Aorta (tissue), 5 donors: ENCODE measurements at regions of chr17 and their contacts with region 1.

Region 1: GRCh38 chr17:5584383-5585286 is at the start of gene NLRP1:
- DNase-seq: peak; percentile 95 to 98
- ATAC-seq: peak; percentile 95
- H3K4me3 ChIP-seq: peak within 1 kb of the TSS; percentile 13 to 37
- H3K27ac ChIP-seq: peak within 1 kb of the TSS in 1 of 2 donors; percentile 71
- H3K4me1 ChIP-seq: no peaks in the 10 kb centered on the region
- H3K27me3 ChIP-seq: no peaks in the 10 kb centered on the region
- total RNA-seq, gene NLRP1: 35.2 to 82.2 TPM

Region 2: DNA sequence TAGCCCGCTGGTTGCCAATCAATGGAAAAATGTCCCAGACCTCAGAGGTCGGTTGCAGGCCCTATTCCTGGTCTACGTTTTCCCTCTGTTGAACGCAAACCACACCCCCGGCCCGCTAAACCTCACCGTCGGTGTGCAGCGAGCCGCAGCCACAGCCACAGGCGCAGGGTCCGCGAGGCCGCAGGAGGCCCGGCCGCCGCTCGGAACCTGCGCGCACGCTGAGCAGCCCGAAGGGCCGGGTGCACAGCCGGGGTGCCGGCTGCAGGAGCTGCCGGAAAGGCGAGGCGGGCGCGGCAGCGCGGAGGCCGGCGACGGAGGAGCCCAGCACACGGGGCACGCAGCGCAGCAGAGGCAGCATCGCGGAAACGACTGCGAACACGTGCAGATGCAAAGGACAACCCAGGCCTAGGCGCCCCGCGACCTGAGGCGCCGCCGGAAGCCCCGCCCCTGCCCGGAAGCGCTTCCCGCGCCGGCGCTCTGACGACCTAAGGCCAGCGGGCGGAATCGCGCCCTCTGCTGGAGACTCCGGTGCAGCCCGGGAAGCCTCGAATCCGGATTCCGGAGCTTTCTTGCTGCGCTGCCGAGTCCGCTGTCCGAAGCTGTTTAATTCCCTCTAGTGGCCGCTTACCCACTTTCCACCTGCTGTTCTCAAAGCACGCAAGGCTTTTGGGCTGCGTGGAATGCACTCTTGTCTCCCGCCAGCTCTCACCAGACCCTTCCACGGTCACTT is 145.8 kb before region 1 on chr17 and contains the start of gene C1QBP:
- intact Hi-C with region 1: no loop called
- DNase-seq: peak; percentile 93 to 97
- ATAC-seq: peak; percentile 99
- H3K4me3 ChIP-seq: peak within 1 kb of the TSS; percentile 19 to 90
- H3K27ac ChIP-seq: peak within 1 kb of the TSS; percentile 49 to 80
- H3K4me1 ChIP-seq: no peaks in the 10 kb centered on the region
- H3K27me3 ChIP-seq: no peaks in the 10 kb centered on the region
- total RNA-seq, gene C1QBP: 51.8 to 60.1 TPM

Region 3: DNA sequence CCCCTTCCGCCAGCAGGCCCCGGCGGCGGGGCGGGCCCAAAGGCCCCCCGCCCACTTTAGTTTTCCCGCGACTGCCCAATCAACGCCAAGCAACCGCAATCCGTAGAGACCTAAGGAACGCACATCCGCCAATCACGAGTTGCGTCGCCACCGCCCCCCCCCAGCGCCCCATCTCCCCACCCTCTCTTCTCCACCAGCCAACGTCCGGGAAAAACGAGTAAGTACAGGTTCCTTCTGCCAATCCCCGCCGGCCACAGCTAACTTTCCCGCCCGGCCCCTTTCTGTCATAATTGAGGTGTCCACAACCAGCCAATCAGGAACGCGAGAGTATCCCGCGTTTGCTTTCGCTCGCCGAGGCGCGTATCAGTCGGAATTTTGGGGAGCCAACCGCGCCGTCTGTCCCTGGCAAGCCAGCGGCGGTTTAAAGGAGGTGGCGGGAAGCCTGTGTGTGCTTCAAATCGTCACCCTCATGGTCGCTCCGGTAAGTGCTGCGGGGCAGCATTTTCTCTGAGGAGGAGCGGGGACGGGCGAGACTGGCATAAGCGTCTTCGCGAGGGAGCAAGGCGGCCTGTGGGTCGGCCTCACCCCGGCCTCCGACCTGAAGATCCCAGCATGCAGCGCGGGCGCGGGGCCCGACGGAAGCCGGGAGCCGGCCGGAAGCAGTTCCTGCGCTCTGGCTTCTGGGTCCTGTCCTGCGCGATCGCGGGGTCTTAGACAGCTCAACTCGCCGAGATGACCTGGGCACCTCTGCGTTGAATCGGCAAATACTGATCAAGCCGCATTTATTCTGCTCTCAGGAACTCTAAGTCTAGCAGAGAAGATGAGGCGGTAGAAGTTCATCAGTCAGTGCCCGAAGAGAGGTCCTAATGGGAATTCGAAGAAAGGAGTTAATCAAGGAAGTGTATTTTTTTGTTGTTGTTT is 98.2 kb before region 1 on chr17 and contains the start of gene MIS12:
- intact Hi-C with region 1: loop called in 1 of 2 experiments (anchors 5 kb)
- DNase-seq: peak; percentile 99
- ATAC-seq: peak; percentile 97
- H3K4me3 ChIP-seq: peak within 1 kb of the TSS; percentile 62 to 86
- H3K27ac ChIP-seq: peak within 1 kb of the TSS; percentile 71 to 99
- H3K4me1 ChIP-seq: no peaks in the 10 kb centered on the region
- H3K27me3 ChIP-seq: no peaks in the 10 kb centered on the region
- total RNA-seq, gene MIS12: 14.6 to 16.1 TPM

Region 4: GRCh38 chr17:5533486-5534315 is 50.9 kb before region 1 on chr17:
- intact Hi-C with region 1: loop called in 1 of 2 experiments (anchors 5 kb)
- DNase-seq: no peak
- ATAC-seq: no peak
- H3K4me3 ChIP-seq: no peak overlapping the region
- H3K27ac ChIP-seq: no peak overlapping the region
- H3K4me1 ChIP-seq: no peaks in the 10 kb centered on the region
- H3K27me3 ChIP-seq: no peaks in the 10 kb centered on the region

Region 5: GRCh38 chr17:6421700-6422604 is 837.3 kb after region 1 on chr17:
- intact Hi-C with region 1: loop called (anchors 1 to 2 kb)
- DNase-seq: peak; percentile 86 to 91
- ATAC-seq: peak; percentile 77
- H3K4me3 ChIP-seq: no peak overlapping the region
- H3K27ac ChIP-seq: no peak overlapping the region
- H3K4me1 ChIP-seq: no peaks in the 10 kb centered on the region
- H3K27me3 ChIP-seq: no peaks in the 10 kb centered on the region

Region 6: DNA sequence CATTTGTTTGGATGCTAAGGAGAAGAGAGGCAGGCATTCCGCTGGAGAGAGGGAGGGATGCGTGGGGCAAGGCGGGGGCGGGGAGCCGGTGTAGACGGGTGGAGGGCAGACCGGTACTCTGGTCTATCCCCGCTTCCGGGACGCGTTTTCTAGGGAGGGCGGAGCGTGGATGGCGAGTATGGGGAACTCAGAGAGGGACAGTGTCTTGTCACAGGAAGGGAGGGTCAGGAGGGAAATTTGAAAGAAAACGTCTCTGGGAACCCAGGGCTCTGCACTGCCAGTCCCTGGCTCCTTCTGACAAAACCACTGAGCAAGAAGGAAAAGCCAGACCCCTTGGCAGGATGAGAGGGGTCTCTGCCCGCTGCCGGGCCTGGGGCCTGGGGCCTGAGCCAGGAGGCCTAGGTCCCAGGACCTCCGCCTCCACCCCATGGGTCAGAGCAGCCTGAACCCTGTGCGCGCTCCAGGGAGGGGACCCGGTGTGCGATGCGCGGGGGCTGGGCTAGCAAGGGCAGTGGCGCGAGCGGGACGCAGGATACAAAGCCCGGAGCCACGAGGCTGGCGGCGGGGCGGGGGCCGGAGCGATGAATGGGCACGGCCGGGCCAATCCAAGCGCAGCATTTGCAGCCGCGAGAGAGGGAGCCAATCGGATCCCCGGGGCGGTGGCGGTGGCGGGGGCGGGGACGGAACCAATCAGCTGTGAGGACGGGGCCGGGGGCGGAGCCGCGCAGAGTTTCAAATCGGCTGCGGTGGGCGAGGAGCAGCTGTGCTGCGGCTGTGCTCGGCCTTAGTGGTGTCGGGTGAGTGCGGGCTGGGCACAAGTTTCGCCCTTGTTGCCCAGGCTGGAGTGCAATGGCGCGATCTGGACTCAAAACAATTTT is 859.3 kb after region 1 on chr17 and contains the start of gene PIMREG:
- intact Hi-C with region 1: loop called in 1 of 2 experiments (anchors 5 kb)
- DNase-seq: peak; percentile 97 to 98
- ATAC-seq: peak; percentile 98
- H3K4me3 ChIP-seq: peak within 1 kb of the TSS; percentile 2 to 53
- H3K27ac ChIP-seq: no peak within 1 kb of the TSS
- H3K4me1 ChIP-seq: no peaks in the 10 kb centered on the region
- H3K27me3 ChIP-seq: no peaks in the 10 kb centered on the region
- total RNA-seq, gene PIMREG: 0.84 TPM in 1 of 2 donors, not detected in the other